Cardiac septum (tissue), 1 donor: ENCODE measurements at regions of chr4 and their contacts with region 1.

Region 1: DNA sequence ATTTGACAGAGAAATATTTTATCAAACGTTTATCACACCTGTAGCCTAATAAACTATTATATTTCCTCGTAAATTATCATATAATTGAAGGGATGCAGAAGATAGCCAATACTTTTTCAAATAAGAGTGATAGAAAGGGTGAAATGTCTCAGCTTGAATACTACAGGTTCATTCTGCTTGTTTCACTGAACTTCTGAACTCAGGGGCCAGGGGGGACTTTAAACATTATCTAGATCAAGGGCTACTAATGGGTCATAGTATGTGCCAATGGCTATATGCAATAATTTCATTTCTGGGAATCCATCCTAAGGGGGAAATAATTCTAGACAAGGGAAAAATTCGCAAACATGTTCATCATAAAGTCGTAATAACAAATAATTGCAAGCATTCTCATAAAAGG is 2.6 kb downstream of the ALPK1 start:
- DNase-seq: no peak

Region 2: GRCh38 chr4:112284662-112285411 is 14.9 kb before region 1 on chr4:
- intact Hi-C with region 1: loop called (anchors 2 kb)
- DNase-seq: no peak